ENCODE measurements at regions of chr22 and their contacts with region 1.

Region 1: GRCh38 chr22:30089655-30089974 is 9.4 kb downstream of the HORMAD2 start:
- H3K4me3 Mint-ChIP-seq: no peak overlapping the region
- H3K27ac Mint-ChIP-seq: no peak overlapping the region
- H3K4me1 Mint-ChIP-seq: peaks cover 9% of the 10 kb centered on the region
- H3K27me3 Mint-ChIP-seq: no peaks in the 10 kb centered on the region

Region 2: GRCh38 chr22:29587938-29588699 is 501.5 kb before region 1 on chr22:
- intact Hi-C with region 1: loop called (anchors 2 kb)
- H3K4me3 Mint-ChIP-seq: no peak overlapping the region
- H3K27ac Mint-ChIP-seq: no peak overlapping the region
- H3K4me1 Mint-ChIP-seq: no peaks in the 10 kb centered on the region
- H3K27me3 Mint-ChIP-seq: no peaks in the 10 kb centered on the region

Region 3: DNA sequence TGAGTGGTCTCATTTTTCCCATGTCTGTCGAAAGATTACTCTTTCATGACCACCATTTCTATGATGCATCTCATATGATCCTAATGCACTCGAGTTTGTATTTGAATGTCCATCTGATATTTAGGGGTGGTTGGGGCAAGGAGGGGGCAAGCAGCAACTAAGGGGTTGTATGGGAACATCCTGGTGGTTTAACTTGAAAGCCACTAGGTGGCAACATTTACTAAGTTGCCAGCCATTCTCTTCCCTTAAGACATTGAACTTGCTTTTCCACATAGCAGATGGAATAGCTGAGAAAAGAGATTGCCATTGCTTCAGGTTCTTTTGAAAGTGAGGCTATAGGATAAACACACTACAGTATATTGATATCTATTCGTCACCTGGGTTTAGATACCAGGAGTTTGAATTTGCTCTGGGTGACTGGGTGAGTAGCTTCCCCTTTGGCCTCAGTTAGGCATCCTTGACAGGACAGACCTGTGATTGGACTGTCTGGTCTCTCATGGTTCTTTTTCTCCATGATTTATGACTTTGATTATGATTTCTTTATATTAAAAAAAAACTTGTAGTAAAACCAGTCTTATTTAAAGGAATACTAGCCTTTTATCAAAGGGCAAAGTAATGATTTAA is 453.8 kb before region 1 on chr22:
- intact Hi-C with region 1: loop called (anchors 1 kb)
- H3K4me3 Mint-ChIP-seq: no peak overlapping the region
- H3K27ac Mint-ChIP-seq: no peak overlapping the region
- H3K4me1 Mint-ChIP-seq: peaks cover 24% of the 10 kb centered on the region
- H3K27me3 Mint-ChIP-seq: no peaks in the 10 kb centered on the region

Region 4: DNA sequence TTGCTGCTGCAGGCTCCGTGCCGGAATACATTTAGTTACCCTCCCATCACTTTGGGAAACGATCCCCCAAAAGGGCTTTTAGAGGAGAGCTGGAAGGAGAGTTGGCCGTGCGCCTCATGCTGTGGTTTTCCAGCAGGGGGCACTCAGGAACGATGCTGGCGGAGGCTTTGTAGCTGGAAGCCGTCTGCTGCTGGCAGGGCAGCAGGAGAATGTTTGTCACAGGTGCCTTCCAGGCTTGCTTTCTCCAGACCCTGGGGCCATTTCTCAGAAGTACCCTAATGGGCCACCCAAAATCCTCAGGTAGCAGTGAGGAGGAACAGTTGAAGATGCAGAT is 399.8 kb before region 1 on chr22:
- intact Hi-C with region 1: loop called (anchors 2 kb)
- H3K4me3 Mint-ChIP-seq: no peak overlapping the region
- H3K27ac Mint-ChIP-seq: no peak overlapping the region
- H3K4me1 Mint-ChIP-seq: no peaks in the 10 kb centered on the region
- H3K27me3 Mint-ChIP-seq: no peaks in the 10 kb centered on the region

Measured in dendritic cell treated with granulocyte-macrophage colony-stimulating factor and Interleukin-4, amounts not matched to agents 40 ng/mL and 50 ng/mL, for 4 days (primary cell).